ENCODE measurements at regions of chr7 and their contacts with region 1.

Region 1: DNA sequence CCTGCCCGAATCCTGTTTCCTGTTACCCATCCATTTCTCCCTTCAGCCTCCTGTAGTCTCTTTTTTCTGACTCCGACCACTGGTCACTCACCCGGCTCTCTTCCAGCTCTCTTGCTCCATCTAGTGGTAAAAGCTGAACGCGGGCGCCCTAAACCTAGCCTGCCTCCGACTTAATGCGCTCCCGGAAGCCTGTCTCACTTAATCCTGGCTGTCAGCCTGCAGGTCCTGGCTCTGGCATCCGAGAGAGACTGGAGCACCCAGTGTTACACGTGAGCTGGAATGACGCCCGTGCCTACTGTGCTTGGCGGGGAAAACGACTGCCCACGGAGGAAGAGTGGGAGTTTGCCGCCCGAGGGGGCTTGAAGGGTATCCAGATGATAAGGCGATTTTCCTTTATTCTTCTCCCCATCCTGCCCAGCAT is 10.3 kb downstream of the SUMF2 start:
- DNase-seq: peak; percentile 31 to 76 (median 65)
- ATAC-seq: peak; percentile 83
- H3K4me3 ChIP-seq: no peak overlapping the region
- H3K4me3 Mint-ChIP-seq: no peak overlapping the region
- H3K27ac ChIP-seq: no peak overlapping the region
- H3K27ac Mint-ChIP-seq: no peak overlapping the region
- H3K4me1 ChIP-seq: no peaks in the 10 kb centered on the region
- H3K4me1 Mint-ChIP-seq: peaks cover 5% of the 10 kb centered on the region
- H3K27me3 ChIP-seq: no peaks in the 10 kb centered on the region
- H3K27me3 Mint-ChIP-seq: no peaks in the 10 kb centered on the region
- CTCF ChIP-seq: peak; percentile 79

Region 2: GRCh38 chr7:55787796-55788195 is 286.6 kb before region 1 on chr7:
- CTCF ChIA-PET with region 1: no interaction called
- POLR2A ChIA-PET with region 1: no interaction called
- intact Hi-C with region 1: no loop called
- DNase-seq: no peak
- ATAC-seq: no peak
- H3K4me3 ChIP-seq: no peak overlapping the region
- H3K4me3 Mint-ChIP-seq: no peak overlapping the region
- H3K27ac ChIP-seq: no peak overlapping the region
- H3K27ac Mint-ChIP-seq: no peak overlapping the region
- H3K4me1 ChIP-seq: no peaks in the 10 kb centered on the region
- H3K4me1 Mint-ChIP-seq: no peaks in the 10 kb centered on the region
- H3K27me3 ChIP-seq: peaks cover 0 to 2% of the 10 kb centered on the region in 2 experiments
- H3K27me3 Mint-ChIP-seq: no peaks in the 10 kb centered on the region
- CTCF ChIP-seq: no peak

Region 3: DNA sequence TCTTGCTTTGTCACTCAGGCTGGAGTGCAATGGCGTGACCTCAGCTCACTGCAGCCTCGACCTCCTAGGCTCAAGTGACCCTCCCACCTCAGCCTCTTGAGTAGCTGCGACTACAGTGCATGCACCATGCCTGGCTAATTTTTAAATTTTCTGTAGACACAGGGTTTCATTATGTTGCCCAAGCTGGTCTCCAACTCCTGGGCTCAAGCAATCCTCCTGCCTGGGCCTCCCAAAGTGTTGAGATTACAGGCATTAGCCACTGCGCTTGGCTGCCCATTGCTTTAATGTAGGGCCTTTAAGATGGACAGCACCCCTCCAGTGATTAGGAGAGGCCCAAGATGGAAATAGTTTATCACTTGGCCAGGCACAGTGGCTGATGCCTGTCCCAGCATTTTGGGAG is 70.6 kb before region 1 on chr7:
- CTCF ChIA-PET with region 1: interaction called, 139 read pairs
- POLR2A ChIA-PET with region 1: interaction called, 3 read pairs
- intact Hi-C with region 1: loop called (anchors 1 kb)
- DNase-seq: no peak
- ATAC-seq: no peak
- H3K4me3 ChIP-seq: no peak overlapping the region
- H3K4me3 Mint-ChIP-seq: no peak overlapping the region
- H3K27ac ChIP-seq: no peak overlapping the region
- H3K27ac Mint-ChIP-seq: no peak overlapping the region
- H3K4me1 ChIP-seq: no peaks in the 10 kb centered on the region
- H3K4me1 Mint-ChIP-seq: no peaks in the 10 kb centered on the region
- H3K27me3 ChIP-seq: no peaks in the 10 kb centered on the region
- H3K27me3 Mint-ChIP-seq: no peaks in the 10 kb centered on the region
- CTCF ChIP-seq: no peak

Region 4: DNA sequence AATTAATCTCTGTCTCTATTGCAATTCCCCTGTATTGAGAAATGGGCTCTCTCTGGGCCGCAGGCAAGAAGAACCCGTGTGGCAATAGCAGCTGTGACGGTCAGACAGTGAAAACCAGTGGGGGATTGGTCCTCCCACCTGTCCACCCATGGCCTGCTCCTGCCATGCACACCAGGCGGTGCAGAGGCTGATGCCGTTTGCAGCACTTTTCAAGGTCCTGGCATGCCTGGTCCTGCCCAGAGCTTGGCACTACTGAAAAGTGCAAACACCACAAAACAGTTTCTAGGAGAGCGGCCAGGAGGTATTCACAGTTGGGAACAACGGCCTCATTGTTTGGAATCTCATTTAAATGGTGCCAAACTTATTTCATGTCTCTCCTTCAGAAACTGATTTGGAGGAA is 64.7 kb before region 1 on chr7:
- CTCF ChIA-PET with region 1: interaction called, 139 read pairs
- POLR2A ChIA-PET with region 1: no interaction called
- intact Hi-C with region 1: loop called (anchors 1 kb)
- DNase-seq: no peak
- ATAC-seq: no peak
- H3K4me3 ChIP-seq: no peak overlapping the region
- H3K4me3 Mint-ChIP-seq: no peak overlapping the region
- H3K27ac ChIP-seq: no peak overlapping the region
- H3K27ac Mint-ChIP-seq: no peak overlapping the region
- H3K4me1 ChIP-seq: no peaks in the 10 kb centered on the region
- H3K4me1 Mint-ChIP-seq: no peaks in the 10 kb centered on the region
- H3K27me3 ChIP-seq: no peaks in the 10 kb centered on the region
- H3K27me3 Mint-ChIP-seq: no peaks in the 10 kb centered on the region
- CTCF ChIP-seq: no peak

Region 5: DNA sequence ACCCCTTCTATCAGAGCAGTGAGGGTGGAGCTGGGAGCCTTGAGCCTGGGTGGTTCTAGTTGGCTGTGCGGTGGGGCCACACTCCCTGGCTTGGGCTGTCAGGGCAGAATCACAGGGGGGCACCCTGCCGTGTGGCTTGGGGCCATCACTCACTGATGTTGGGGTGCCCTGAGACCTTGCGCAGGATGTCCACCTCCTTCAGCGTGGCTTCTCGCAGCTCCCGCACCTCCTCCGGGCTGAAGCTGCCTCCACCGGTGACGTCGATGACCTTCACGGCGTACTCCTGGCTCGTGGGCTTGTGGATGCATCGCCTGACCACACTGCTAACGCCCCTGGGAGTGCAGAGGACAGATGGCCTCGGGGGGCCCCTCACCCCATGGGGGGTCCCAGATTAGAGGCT is 13.1 kb after region 1 on chr7:
- CTCF ChIA-PET with region 1: interaction called, 21 read pairs
- POLR2A ChIA-PET with region 1: interaction called, 5 read pairs
- intact Hi-C with region 1: no loop called
- DNase-seq: no peak
- ATAC-seq: no peak
- H3K4me3 ChIP-seq: no peak overlapping the region
- H3K4me3 Mint-ChIP-seq: no peak overlapping the region
- H3K27ac ChIP-seq: no peak overlapping the region
- H3K27ac Mint-ChIP-seq: no peak overlapping the region
- H3K4me1 ChIP-seq: no peaks in the 10 kb centered on the region
- H3K4me1 Mint-ChIP-seq: no peaks in the 10 kb centered on the region
- H3K27me3 ChIP-seq: no peaks in the 10 kb centered on the region
- H3K27me3 Mint-ChIP-seq: no peaks in the 10 kb centered on the region
- CTCF ChIP-seq: no peak

Region 6: GRCh38 chr7:56181000-56181399 is 106.6 kb after region 1 on chr7:
- CTCF ChIA-PET with region 1: no interaction called
- POLR2A ChIA-PET with region 1: no interaction called
- intact Hi-C with region 1: no loop called
- DNase-seq: no peak
- ATAC-seq: no peak
- H3K4me3 ChIP-seq: no peak overlapping the region
- H3K4me3 Mint-ChIP-seq: no peak overlapping the region
- H3K27ac ChIP-seq: no peak overlapping the region
- H3K27ac Mint-ChIP-seq: no peak overlapping the region
- H3K4me1 ChIP-seq: no peaks in the 10 kb centered on the region
- H3K4me1 Mint-ChIP-seq: no peaks in the 10 kb centered on the region
- H3K27me3 ChIP-seq: no peaks in the 10 kb centered on the region
- H3K27me3 Mint-ChIP-seq: peaks cover 3% of the 10 kb centered on the region
- CTCF ChIP-seq: no peak